Activated T-helper 1 cell treated with anti-CD3 and anti-CD28 coated beads, Interleukin-12 subunit alpha, Interleukin-12 subunit beta, Interleukin-2, Interleukin-4 antibody, amounts not matched to agents 30 ng/mL and 10 ng/mL and 1 ng/mL, durations not matched to agents 14 hours and 24 hours and 36 hours (primary cell): ENCODE measurements at regions of chr11 and their contacts with region 1.

Region 1: DNA sequence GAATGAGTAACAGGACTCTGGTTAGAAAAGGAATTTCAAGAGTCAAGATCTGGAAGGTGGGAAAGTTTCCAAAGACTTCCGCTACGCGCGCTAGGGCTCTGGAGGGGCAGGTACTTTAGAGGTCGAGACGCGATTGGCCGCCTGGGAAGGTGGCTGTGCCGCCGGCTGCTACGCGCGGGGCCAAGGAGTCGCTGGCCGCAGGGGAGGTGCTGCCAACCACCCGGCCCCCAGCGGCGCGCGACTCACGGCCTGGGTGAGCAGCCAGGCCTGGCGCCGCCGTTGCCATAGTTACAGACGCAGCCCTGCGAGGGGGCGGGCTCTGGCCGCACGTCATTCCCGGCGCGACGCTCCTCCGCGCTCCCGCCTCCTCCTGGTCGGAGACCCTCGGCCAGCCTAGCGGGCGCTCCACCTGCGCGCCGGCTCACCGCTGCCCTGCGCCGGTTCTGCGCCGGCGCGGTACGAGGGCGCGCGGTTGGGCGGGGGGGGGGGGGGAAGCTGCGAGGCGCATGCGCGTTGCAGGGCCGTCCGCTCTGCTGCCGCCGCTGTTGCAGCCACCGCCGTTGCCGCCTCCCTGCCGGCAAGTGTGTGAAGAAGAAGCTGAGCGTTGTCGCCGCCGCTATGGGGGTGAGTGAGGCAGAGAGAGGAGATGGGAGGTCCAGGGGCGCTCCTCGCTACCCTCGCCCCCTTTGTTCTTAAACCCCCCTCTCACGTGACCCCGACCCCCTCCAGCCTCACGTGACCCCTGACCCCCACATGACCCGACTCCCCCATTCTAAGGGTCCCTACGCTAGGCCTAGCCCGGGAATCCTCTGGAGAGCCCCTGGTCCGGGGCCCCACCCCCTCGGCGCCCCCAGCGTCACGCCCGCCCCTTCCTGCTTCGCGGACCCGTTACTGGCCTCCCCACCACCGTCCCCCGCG is at the start of gene NAA40:
- DNase-seq: peak; percentile 89
- H3K4me3 Mint-ChIP-seq: peak within 1 kb of the TSS; percentile 87
- H3K27ac Mint-ChIP-seq: peak within 1 kb of the TSS; percentile 82
- H3K4me1 Mint-ChIP-seq: peaks cover 7% of the 10 kb centered on the region
- H3K27me3 Mint-ChIP-seq: no peaks in the 10 kb centered on the region
- total RNA-seq, gene NAA40: 25.3 and 31.6 TPM in 2 replicates

Region 2: GRCh38 chr11:63768237-63769043 is 170.3 kb before region 1 on chr11 and contains the start of gene ZFTA:
- intact Hi-C with region 1: loop called (anchors 2 kb)
- DNase-seq: peak; percentile 45
- H3K4me3 Mint-ChIP-seq: peak within 1 kb of the TSS; percentile 87
- H3K27ac Mint-ChIP-seq: peak within 1 kb of the TSS; percentile 35
- H3K4me1 Mint-ChIP-seq: peaks cover 14% of the 10 kb centered on the region
- H3K27me3 Mint-ChIP-seq: peaks cover 33% of the 10 kb centered on the region
- total RNA-seq, gene ZFTA: 3.8 and 5.3 TPM in 2 replicates

Region 3: GRCh38 chr11:63866211-63866610 is 72.5 kb before region 1 on chr11:
- intact Hi-C with region 1: loop called (anchors 1 kb)
- DNase-seq: peak; percentile 60
- H3K4me3 Mint-ChIP-seq: peak overlapping the region; percentile 68
- H3K27ac Mint-ChIP-seq: peak overlapping the region; percentile 45
- H3K4me1 Mint-ChIP-seq: peaks cover 78% of the 10 kb centered on the region
- H3K27me3 Mint-ChIP-seq: no peaks in the 10 kb centered on the region

Region 4: GRCh38 chr11:63901660-63902059 is 37.1 kb before region 1 on chr11:
- intact Hi-C with region 1: no loop called
- DNase-seq: no peak
- H3K4me3 Mint-ChIP-seq: no peak overlapping the region
- H3K27ac Mint-ChIP-seq: no peak overlapping the region
- H3K4me1 Mint-ChIP-seq: peaks cover 3% of the 10 kb centered on the region
- H3K27me3 Mint-ChIP-seq: no peaks in the 10 kb centered on the region

Region 5: DNA sequence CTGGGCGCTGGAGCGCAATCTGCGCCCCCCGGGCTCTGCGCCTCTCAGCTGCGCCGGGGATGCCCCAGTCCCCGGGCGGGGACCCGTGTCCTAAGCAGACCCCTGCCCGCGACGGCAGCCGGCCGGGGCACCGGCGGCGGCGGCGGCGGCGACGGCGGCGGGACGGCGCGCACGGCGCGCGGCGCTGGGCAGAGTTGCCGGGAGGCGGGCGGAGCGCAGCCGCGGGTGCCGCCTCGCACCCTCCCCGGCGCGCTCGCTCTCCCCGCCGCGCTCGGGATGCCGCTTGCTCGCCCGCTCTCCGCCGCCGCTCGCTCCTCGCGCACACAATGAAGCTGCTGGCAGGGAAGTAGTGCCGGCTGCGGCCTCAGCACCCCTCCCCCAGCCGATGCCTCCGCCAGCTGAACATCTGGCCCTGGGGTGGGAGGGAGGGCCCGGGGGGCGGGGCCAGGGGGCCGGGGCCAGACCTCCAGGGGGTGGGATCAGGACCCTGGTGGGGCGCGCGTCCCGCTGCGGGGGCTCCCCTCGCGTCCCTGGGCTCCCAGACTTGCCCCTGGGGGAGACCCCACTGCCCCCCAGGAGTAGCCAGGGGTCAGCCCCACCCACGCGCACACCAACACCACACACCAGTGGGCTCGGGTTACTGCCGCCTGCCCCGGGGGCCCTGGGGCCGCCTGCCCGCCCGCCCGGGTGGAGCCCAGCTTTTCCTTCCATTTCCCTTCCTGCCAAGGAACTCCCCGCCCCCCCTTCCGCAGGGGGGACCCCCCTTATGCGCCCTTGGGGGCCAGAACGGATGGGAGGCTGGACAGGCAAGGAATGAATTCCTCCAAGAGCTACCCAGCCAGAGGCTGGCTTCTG is 21.7 kb before region 1 on chr11 and contains the start of gene RCOR2:
- intact Hi-C with region 1: loop called (anchors 2 kb)
- DNase-seq: peak; percentile 45
- H3K4me3 Mint-ChIP-seq: peak within 1 kb of the TSS; percentile 82
- H3K27ac Mint-ChIP-seq: no peak within 1 kb of the TSS
- H3K4me1 Mint-ChIP-seq: peaks cover 9% of the 10 kb centered on the region
- H3K27me3 Mint-ChIP-seq: peaks cover 13% of the 10 kb centered on the region
- total RNA-seq, gene RCOR2: 0.21 and 0.34 TPM in 2 replicates

Region 6: DNA sequence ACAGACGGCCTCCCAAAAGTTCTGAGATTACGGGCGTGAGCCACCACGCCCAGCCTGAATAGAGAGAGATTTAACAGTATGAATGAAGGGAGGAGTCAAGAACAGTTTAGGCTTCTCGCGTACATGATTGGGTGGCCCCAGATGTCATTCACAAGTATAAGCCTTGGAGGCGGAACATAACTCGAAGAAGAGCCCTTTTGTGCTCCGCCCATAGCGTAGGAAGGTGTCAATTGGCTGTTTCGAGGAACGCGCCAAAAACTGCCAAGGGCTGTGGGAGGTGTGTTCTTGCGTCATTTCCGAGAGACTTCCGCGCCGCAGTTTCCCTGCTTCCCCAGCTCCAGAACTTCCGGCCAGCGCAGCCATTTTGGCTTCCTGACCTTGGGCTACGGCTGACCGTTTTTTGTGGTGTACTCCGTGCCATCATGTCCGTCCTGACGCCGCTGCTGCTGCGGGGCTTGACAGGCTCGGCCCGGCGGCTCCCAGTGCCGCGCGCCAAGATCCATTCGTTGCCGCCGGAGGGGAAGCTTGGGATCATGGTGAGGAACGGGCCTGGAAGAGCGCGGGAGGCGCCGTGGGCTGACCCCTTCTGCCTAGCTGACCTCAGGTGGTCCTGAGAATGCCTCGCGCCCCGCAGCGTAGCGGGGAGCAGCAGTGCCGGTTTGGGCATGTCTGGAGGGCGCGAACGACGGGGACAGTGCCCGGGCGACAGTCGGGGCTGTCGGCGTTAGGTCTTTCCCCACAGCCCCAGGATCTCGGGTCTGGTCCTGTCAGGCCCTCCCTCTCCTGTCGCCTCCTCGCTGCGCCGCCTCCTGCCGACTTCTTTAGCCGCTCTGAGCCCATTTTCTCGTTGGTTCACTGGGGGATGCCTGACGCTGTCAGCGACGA is 35.8 kb after region 1 on chr11 and contains the start of gene COX8A:
- intact Hi-C with region 1: loop called (anchors 1 kb)
- DNase-seq: peak; percentile 96
- H3K4me3 Mint-ChIP-seq: peak within 1 kb of the TSS; percentile 100
- H3K27ac Mint-ChIP-seq: peak within 1 kb of the TSS; percentile 97
- H3K4me1 Mint-ChIP-seq: peaks cover 17% of the 10 kb centered on the region
- H3K27me3 Mint-ChIP-seq: peaks cover 8% of the 10 kb centered on the region
- total RNA-seq, gene COX8A: 289 and 291 TPM in 2 replicates

Region 7: GRCh38 chr11:64165849-64166635 is 227.3 kb after region 1 on chr11 and contains the start of gene MACROD1:
- intact Hi-C with region 1: loop called (anchors 2 kb)
- DNase-seq: peak; percentile 78
- H3K4me3 Mint-ChIP-seq: peak within 1 kb of the TSS; percentile 93
- H3K27ac Mint-ChIP-seq: peak within 1 kb of the TSS; percentile 86
- H3K4me1 Mint-ChIP-seq: peaks cover 8% of the 10 kb centered on the region
- H3K27me3 Mint-ChIP-seq: peaks cover 2% of the 10 kb centered on the region
- total RNA-seq, gene MACROD1: 17.4 and 20.2 TPM in 2 replicates